ENCODE measurements at regions of chr9 and their contacts with region 1.

Region 1: DNA sequence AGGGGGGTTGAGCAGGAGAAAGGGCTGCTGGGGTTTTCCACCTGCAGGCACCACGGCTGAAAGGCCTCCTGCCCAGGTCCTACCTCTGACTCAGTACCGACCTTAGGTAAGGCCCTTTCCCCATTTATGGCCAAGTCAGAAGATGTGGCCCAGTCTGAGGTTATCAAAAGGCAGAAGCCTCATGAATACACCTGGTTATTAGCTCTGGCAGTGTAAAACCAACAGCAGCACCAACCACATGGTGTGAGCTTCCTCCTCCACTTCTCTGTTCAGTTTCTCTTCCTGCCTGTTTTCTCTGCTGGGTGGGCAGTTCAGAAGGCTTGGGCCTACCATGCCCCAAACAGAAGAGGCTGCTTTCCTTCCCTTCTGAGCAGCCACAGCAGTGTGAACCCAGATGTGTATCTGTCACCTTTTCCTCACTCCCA is 86.9 kb downstream of the UGCG start:
- DNase-seq: peak; percentile 83
- ATAC-seq: peak; percentile 87
- H3K4me3 ChIP-seq: no peak overlapping the region
- H3K4me3 Mint-ChIP-seq: peak overlapping the region; percentile 44
- H3K27ac ChIP-seq: peak overlapping the region; percentile 70 to 85
- H3K27ac Mint-ChIP-seq: peak overlapping the region; percentile 95
- H3K4me1 ChIP-seq: peaks cover 45 to 54% of the 10 kb centered on the region in 2 donors
- H3K4me1 Mint-ChIP-seq: peaks cover 57% of the 10 kb centered on the region
- H3K27me3 ChIP-seq: no peaks in the 10 kb centered on the region
- H3K27me3 Mint-ChIP-seq: no peaks in the 10 kb centered on the region
- CTCF ChIP-seq: no peak

Region 2: GRCh38 chr9:111759762-111760639 is 223.5 kb before region 1 on chr9:
- CTCF ChIA-PET with region 1: interaction called, 4 read pairs
- POLR2A ChIA-PET with region 1: no interaction called
- intact Hi-C with region 1: loop called (anchors 5 kb)
- DNase-seq: peak; percentile 82
- ATAC-seq: peak; percentile 82
- H3K4me3 ChIP-seq: no peak overlapping the region
- H3K4me3 Mint-ChIP-seq: no peak overlapping the region
- H3K27ac ChIP-seq: no peak overlapping the region
- H3K27ac Mint-ChIP-seq: no peak overlapping the region
- H3K4me1 ChIP-seq: peaks cover 0 to 3% of the 10 kb centered on the region in 2 donors
- H3K4me1 Mint-ChIP-seq: peaks cover 4% of the 10 kb centered on the region
- H3K27me3 ChIP-seq: no peaks in the 10 kb centered on the region
- H3K27me3 Mint-ChIP-seq: no peaks in the 10 kb centered on the region
- CTCF ChIP-seq: peak; percentile 91

Region 3: DNA sequence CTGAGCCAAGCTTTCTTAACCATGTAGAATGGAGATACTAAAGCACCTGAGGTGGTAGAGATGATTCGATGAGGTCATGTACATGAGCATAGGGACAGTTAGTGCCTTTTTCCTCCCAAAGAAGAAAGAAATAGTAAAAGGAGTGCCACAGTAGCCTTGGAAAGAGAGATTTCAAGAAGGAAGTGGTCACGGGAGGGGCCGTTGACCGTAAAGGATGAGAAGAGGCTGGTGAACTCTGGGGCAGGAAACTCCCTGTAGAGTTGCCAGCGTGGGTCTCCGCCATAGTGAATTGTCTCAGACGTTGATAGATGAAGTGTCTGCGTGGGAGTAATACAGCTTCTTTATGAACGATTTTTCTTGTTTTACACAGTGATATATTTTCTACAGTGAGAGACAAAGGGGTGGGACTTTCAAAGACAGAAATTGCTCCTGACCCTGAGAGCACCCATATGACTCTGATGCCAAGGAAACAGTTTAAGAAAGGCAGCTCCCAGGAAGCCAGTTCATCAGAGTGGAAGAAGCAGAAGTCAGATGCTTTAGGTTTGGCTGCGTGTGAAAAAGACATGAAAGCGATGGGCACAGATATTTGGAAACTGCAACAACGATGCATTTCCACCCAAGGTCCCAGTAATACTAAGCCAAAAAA is 45.6 kb before region 1 on chr9:
- CTCF ChIA-PET with region 1: no interaction called
- POLR2A ChIA-PET with region 1: no interaction called
- intact Hi-C with region 1: loop called (anchors 10 kb)
- DNase-seq: peak; percentile 69
- ATAC-seq: peak; percentile 72
- H3K4me3 ChIP-seq: peak overlapping the region in 2 of 5 experiments; percentile 10 to 22
- H3K4me3 Mint-ChIP-seq: peak overlapping the region; percentile 64
- H3K27ac ChIP-seq: peak overlapping the region; percentile 61 to 83
- H3K27ac Mint-ChIP-seq: peak overlapping the region; percentile 81
- H3K4me1 ChIP-seq: peaks cover 23 to 28% of the 10 kb centered on the region in 2 donors
- H3K4me1 Mint-ChIP-seq: peaks cover 31% of the 10 kb centered on the region
- H3K27me3 ChIP-seq: no peaks in the 10 kb centered on the region
- H3K27me3 Mint-ChIP-seq: no peaks in the 10 kb centered on the region
- CTCF ChIP-seq: no peak

Region 4: DNA sequence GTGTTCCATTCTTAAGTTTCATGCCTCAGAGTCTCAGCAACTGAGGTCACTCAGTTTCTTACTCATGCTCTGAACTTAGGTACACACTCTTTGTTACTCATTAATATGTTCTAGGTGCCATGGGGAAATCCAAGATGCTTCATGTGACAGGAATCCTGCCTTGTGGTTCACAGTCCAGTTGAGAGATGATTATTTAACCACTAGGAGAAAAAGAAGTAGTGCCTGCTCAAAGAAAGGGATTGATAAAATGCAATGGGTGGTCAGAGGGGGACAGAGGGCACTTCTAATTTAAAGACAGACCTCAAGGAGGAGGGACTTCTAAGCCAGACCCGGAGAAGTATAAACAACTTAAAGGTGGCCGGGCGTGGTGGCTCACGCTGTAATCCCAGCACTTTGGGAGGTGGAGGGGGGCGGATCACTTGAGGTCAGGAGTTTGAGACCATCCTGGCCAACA is 17.9 kb before region 1 on chr9:
- CTCF ChIA-PET with region 1: no interaction called
- POLR2A ChIA-PET with region 1: no interaction called
- intact Hi-C with region 1: no loop called
- DNase-seq: no peak
- ATAC-seq: no peak
- H3K4me3 ChIP-seq: no peak overlapping the region
- H3K4me3 Mint-ChIP-seq: no peak overlapping the region
- H3K27ac ChIP-seq: no peak overlapping the region
- H3K27ac Mint-ChIP-seq: peak overlapping the region; percentile 1
- H3K4me1 ChIP-seq: peaks cover 0 to 6% of the 10 kb centered on the region in 2 donors
- H3K4me1 Mint-ChIP-seq: peaks cover 20% of the 10 kb centered on the region
- H3K27me3 ChIP-seq: no peaks in the 10 kb centered on the region
- H3K27me3 Mint-ChIP-seq: no peaks in the 10 kb centered on the region
- CTCF ChIP-seq: no peak

Region 5: GRCh38 chr9:112002131-112002846 is 18.8 kb after region 1 on chr9:
- CTCF ChIA-PET with region 1: interaction called, 10 read pairs
- POLR2A ChIA-PET with region 1: no interaction called
- intact Hi-C with region 1: no loop called
- DNase-seq: peak; percentile 29
- ATAC-seq: peak; percentile 35
- H3K4me3 ChIP-seq: no peak overlapping the region
- H3K4me3 Mint-ChIP-seq: peak overlapping the region; percentile 12
- H3K27ac ChIP-seq: peak overlapping the region in 1 of 2 donors; percentile 32
- H3K27ac Mint-ChIP-seq: peak overlapping the region; percentile 54
- H3K4me1 ChIP-seq: peaks cover 41 to 45% of the 10 kb centered on the region in 2 donors
- H3K4me1 Mint-ChIP-seq: peaks cover 48% of the 10 kb centered on the region
- H3K27me3 ChIP-seq: no peaks in the 10 kb centered on the region
- H3K27me3 Mint-ChIP-seq: no peaks in the 10 kb centered on the region
- CTCF ChIP-seq: no peak

Region 6: DNA sequence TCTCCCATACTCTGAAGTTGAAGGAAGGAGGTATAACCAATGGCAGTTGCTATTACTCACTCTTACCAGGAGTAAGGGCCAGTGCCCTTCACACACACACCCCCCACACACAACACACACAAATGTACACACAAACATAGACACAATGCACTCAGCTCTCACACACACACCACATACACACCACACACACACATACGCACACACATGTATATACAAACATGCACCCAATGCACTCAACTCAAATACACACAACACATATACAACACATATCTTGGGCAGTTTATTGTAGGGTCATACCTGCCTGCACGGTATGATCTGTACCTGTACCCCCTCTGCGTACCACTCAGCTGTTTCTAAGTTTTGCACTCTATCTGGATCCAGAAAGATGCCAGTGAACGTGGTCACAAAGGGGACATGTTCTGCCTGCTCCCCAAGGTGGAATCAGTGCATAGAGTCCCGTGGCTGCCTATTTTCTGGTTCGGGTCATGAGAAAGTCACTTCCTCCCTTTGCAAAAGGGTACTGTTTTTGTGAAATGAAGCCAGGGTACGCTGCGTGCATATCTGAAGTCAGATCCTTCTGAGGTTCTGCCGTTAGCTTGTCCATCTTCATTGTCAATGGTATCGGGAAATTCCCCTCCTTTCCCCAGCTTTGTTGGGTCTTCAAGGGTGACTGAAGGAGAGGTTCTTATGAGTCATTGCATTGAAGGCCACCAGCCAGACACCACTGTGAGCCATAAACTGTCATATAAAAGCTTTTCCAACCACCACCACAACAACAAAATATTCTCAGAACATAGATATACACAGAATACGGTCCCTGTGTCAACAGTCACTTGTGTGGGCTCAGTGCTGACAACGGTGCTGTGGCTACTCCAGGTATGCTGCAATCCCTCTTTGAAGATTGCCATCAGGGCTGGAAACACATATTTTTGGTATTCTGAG is 45.1 kb after region 1 on chr9:
- CTCF ChIA-PET with region 1: no interaction called
- POLR2A ChIA-PET with region 1: interaction called, 3 read pairs
- intact Hi-C with region 1: loop called (anchors 2 kb)
- DNase-seq: peak; percentile 56
- ATAC-seq: peak; percentile 53
- H3K4me3 ChIP-seq: no peak overlapping the region
- H3K4me3 Mint-ChIP-seq: peak overlapping the region; percentile 67
- H3K27ac ChIP-seq: peak overlapping the region in 1 of 2 donors; percentile 87
- H3K27ac Mint-ChIP-seq: peak overlapping the region; percentile 89
- H3K4me1 ChIP-seq: peaks cover 55% of the 10 kb centered on the region in 2 donors
- H3K4me1 Mint-ChIP-seq: peaks cover 55% of the 10 kb centered on the region
- H3K27me3 ChIP-seq: no peaks in the 10 kb centered on the region
- H3K27me3 Mint-ChIP-seq: no peaks in the 10 kb centered on the region
- CTCF ChIP-seq: no peak

Measured in B cell (primary cell).